B cell (primary cell): ENCODE measurements at regions of chr1 and their contacts with region 1.

Region 1: GRCh38 chr1:150979092-150980056 is 2.7 kb upstream of the ANXA9 start:
- DNase-seq: peak; percentile 92
- ATAC-seq: peak; percentile 56
- H3K4me3 ChIP-seq: peak overlapping the region; percentile 38 to 72 (median 50)
- H3K4me3 Mint-ChIP-seq: peak overlapping the region; percentile 79
- H3K27ac ChIP-seq: no peak overlapping the region
- H3K27ac Mint-ChIP-seq: peak overlapping the region; percentile 88
- H3K4me1 ChIP-seq: peaks cover 22 to 35% of the 10 kb centered on the region in 2 donors
- H3K4me1 Mint-ChIP-seq: peaks cover 31% of the 10 kb centered on the region
- H3K27me3 ChIP-seq: no peaks in the 10 kb centered on the region
- H3K27me3 Mint-ChIP-seq: no peaks in the 10 kb centered on the region
- CTCF ChIP-seq: peak; percentile 100

Region 2: DNA sequence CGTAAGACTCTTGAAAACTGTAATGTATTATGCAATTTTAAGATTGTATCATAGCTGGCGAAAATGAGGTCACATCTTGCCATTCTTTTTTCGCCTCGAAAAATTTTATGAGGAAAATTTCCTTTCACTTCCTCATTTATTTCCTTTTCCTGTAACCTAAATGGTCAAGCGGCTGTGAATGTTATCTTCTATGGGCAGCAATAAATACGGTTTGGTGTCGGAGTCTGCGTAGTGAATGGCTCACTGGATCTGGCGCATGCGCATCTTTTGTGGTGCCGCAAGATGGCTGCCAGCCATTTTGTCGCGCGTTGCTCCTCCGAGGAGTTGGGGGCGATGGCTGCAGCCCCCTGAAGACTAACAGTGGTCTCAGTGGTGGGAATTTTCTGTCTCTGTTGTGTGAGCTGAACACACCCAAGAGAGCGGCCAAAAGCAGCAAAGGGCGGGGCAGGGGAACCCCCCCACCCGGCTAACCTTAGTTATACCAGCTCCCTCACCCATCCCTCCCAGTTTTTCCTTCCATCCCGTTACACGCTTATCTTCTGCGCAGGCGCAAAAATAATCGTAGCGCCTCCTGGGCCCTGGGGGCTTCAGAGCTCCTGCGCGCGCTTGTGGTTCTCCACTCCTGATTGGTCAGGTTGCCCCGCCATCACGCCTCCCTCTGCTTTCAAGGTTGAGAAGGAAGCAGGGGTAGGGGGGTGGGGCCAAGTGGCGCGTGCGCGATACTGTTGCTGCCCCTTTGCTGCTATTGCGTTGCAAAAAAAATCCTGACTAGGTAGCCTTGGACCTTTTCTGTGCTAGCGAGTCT is 615.7 kb before region 1 on chr1 and contains the start of gene RPRD2:
- CTCF ChIA-PET with region 1: no interaction called
- POLR2A ChIA-PET with region 1: interaction called, 4 read pairs
- intact Hi-C with region 1: loop called (anchors 1 kb)
- DNase-seq: peak; percentile 99
- ATAC-seq: peak; percentile 94
- H3K4me3 ChIP-seq: peak within 1 kb of the TSS; percentile 74 to 99 (median 90)
- H3K4me3 Mint-ChIP-seq: peak within 1 kb of the TSS; percentile 99
- H3K27ac ChIP-seq: peak within 1 kb of the TSS; percentile 87 to 90
- H3K27ac Mint-ChIP-seq: peak within 1 kb of the TSS; percentile 99
- H3K4me1 ChIP-seq: peaks cover 21 to 24% of the 10 kb centered on the region in 2 donors
- H3K4me1 Mint-ChIP-seq: peaks cover 31% of the 10 kb centered on the region
- H3K27me3 ChIP-seq: no peaks in the 10 kb centered on the region
- H3K27me3 Mint-ChIP-seq: no peaks in the 10 kb centered on the region
- CTCF ChIP-seq: no peak
- total RNA-seq, gene RPRD2: 49.1 and 51.4 TPM in 2 replicates

Region 3: GRCh38 chr1:150765296-150765976 is 213.9 kb before region 1 on chr1 and contains the start of gene CTSS:
- CTCF ChIA-PET with region 1: no interaction called
- POLR2A ChIA-PET with region 1: interaction called, 4 read pairs
- intact Hi-C with region 1: loop called (anchors 1 kb)
- DNase-seq: peak; percentile 86
- ATAC-seq: peak; percentile 87
- H3K4me3 ChIP-seq: peak within 1 kb of the TSS; percentile 62 to 99 (median 80)
- H3K4me3 Mint-ChIP-seq: peak within 1 kb of the TSS; percentile 96
- H3K27ac ChIP-seq: peak within 1 kb of the TSS; percentile 85 to 97
- H3K27ac Mint-ChIP-seq: peak within 1 kb of the TSS; percentile 97
- H3K4me1 ChIP-seq: peaks cover 36 to 40% of the 10 kb centered on the region in 2 donors
- H3K4me1 Mint-ChIP-seq: peaks cover 45% of the 10 kb centered on the region
- H3K27me3 ChIP-seq: no peaks in the 10 kb centered on the region
- H3K27me3 Mint-ChIP-seq: no peaks in the 10 kb centered on the region
- CTCF ChIP-seq: no peak
- total RNA-seq, gene CTSS: 221 and 241 TPM in 2 replicates

Region 4: GRCh38 chr1:150909585-150910180 is 69.7 kb before region 1 on chr1:
- CTCF ChIA-PET with region 1: no interaction called
- POLR2A ChIA-PET with region 1: no interaction called
- intact Hi-C with region 1: no loop called
- DNase-seq: peak; percentile 29
- ATAC-seq: no peak
- H3K4me3 ChIP-seq: no peak overlapping the region
- H3K4me3 Mint-ChIP-seq: no peak overlapping the region
- H3K27ac ChIP-seq: no peak overlapping the region
- H3K27ac Mint-ChIP-seq: peak overlapping the region; percentile 58
- H3K4me1 ChIP-seq: peaks cover 6 to 9% of the 10 kb centered on the region in 2 donors
- H3K4me1 Mint-ChIP-seq: peaks cover 7% of the 10 kb centered on the region
- H3K27me3 ChIP-seq: no peaks in the 10 kb centered on the region
- H3K27me3 Mint-ChIP-seq: no peaks in the 10 kb centered on the region
- CTCF ChIP-seq: no peak

Region 5: DNA sequence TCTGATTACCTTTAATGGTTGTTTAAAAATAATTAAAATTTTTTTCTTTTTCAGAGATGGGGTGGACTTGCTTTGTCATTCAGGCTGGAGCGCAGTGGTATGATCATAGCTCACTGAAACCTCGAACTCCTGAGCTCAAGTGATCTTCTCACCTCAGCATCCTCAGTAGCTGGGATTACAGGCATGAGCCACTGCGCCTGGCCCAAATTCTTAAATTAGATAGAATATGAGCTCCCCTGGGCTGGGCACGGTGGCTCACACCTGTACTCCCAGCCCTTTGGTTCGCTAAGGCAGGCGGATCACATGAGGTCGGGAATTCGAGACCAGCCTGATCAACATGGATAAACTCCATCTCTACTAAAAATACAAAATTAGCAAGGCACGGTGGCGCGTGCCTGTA is 21.7 kb before region 1 on chr1:
- CTCF ChIA-PET with region 1: interaction called, 13 read pairs
- POLR2A ChIA-PET with region 1: interaction called, 5 read pairs
- intact Hi-C with region 1: no loop called
- DNase-seq: no peak
- ATAC-seq: no peak
- H3K4me3 ChIP-seq: no peak overlapping the region
- H3K4me3 Mint-ChIP-seq: no peak overlapping the region
- H3K27ac ChIP-seq: no peak overlapping the region
- H3K27ac Mint-ChIP-seq: no peak overlapping the region
- H3K4me1 ChIP-seq: no peaks in the 10 kb centered on the region
- H3K4me1 Mint-ChIP-seq: no peaks in the 10 kb centered on the region
- H3K27me3 ChIP-seq: no peaks in the 10 kb centered on the region
- H3K27me3 Mint-ChIP-seq: no peaks in the 10 kb centered on the region
- CTCF ChIP-seq: no peak

Region 6: GRCh38 chr1:151008190-151008860 is 29.0 kb after region 1 on chr1 and contains the start of gene PRUNE1:
- CTCF ChIA-PET with region 1: interaction called, 23 read pairs
- POLR2A ChIA-PET with region 1: interaction called, 3 read pairs
- intact Hi-C with region 1: loop called (anchors 1 kb)
- DNase-seq: peak; percentile 98
- ATAC-seq: peak; percentile 97
- H3K4me3 ChIP-seq: peak within 1 kb of the TSS; percentile 74 to 98 (median 85)
- H3K4me3 Mint-ChIP-seq: peak within 1 kb of the TSS; percentile 90
- H3K27ac ChIP-seq: peak within 1 kb of the TSS; percentile 82 to 95
- H3K27ac Mint-ChIP-seq: peak within 1 kb of the TSS; percentile 94
- H3K4me1 ChIP-seq: peaks cover 39 to 55% of the 10 kb centered on the region in 2 donors
- H3K4me1 Mint-ChIP-seq: peaks cover 66% of the 10 kb centered on the region
- H3K27me3 ChIP-seq: no peaks in the 10 kb centered on the region
- H3K27me3 Mint-ChIP-seq: no peaks in the 10 kb centered on the region
- CTCF ChIP-seq: no peak
- total RNA-seq, gene PRUNE1: 20.8 and 21.3 TPM in 2 replicates

Region 7: DNA sequence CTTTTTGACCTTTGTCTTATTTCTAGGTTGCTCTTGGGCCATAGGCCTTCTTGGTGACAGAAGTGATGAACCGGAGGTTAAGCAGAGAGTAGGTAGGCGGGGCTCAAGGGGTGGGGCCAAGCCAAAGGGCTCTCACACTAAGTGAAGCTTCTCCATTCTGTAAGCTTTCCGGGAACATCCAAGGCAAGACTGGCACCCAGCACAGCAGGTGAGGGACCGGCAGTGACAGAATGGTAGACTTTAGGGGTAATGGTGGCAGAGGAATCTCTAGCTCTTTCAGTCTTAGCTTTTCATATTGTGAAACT is 177.1 kb after region 1 on chr1 and contains the start of gene TNFAIP8L2:
- CTCF ChIA-PET with region 1: no interaction called
- POLR2A ChIA-PET with region 1: no interaction called
- intact Hi-C with region 1: loop called (anchors 1 kb)
- DNase-seq: peak; percentile 77
- ATAC-seq: peak; percentile 85
- H3K4me3 ChIP-seq: peak within 1 kb of the TSS; percentile 72 to 98 (median 72)
- H3K4me3 Mint-ChIP-seq: peak within 1 kb of the TSS; percentile 99
- H3K27ac ChIP-seq: peak within 1 kb of the TSS; percentile 29 to 79
- H3K27ac Mint-ChIP-seq: peak within 1 kb of the TSS; percentile 97
- H3K4me1 ChIP-seq: peaks cover 30 to 37% of the 10 kb centered on the region in 2 donors
- H3K4me1 Mint-ChIP-seq: peaks cover 41% of the 10 kb centered on the region
- H3K27me3 ChIP-seq: no peaks in the 10 kb centered on the region
- H3K27me3 Mint-ChIP-seq: no peaks in the 10 kb centered on the region
- CTCF ChIP-seq: no peak
- total RNA-seq, gene TNFAIP8L2: 14.9 and 17.6 TPM in 2 replicates